A673 (cell line): ENCODE measurements at regions of chr18 and their contacts with region 1.

Region 1: DNA sequence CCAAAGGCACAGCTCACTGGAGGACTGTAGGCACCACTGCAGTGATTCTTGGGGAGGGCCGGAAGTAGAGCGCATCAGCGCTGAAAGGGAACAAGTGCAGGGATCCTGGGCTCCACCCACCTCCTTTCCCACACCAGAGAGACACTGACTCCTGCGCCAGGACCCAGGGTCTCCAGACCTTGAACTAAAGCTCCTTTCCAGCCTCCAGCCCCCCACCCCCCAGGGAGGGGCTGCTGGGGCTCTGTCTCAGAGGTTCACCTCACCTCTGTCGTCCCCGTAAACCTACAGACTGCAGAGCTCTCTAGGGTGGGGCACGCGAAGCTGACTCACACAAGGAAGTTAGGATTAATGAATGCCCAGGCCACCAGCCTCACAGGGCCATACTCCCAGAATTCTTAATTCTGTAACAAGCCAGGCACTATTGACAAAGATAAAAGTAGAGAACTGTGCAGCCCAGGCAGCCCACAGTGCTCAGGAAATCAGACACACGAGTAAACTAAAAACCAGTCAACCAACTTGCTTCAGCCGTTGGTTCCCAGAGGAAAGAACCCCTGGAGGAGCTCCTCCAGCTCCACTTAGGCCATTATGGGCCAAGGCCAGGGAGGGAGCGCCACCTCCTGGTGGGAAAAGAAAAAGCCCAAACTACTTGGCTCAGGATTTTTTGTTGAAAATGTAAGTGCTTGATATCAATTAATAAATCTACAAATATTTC is 45.1 kb upstream of the ACAA2 start:
- DNase-seq: peak; percentile 79
- H3K4me3 ChIP-seq: no peak overlapping the region
- H3K27ac ChIP-seq: no peak overlapping the region
- H3K4me1 ChIP-seq: no peaks in the 10 kb centered on the region
- H3K27me3 ChIP-seq: no peaks in the 10 kb centered on the region
- CTCF ChIP-seq: peak; percentile 95

Region 2: GRCh38 chr18:49464718-49465598 is 393.5 kb before region 1 on chr18:
- CTCF ChIA-PET with region 1: interaction called, 16 read pairs
- POLR2A ChIA-PET with region 1: no interaction called
- intact Hi-C with region 1: loop called (anchors 1 kb)
- DNase-seq: peak; percentile 89
- H3K4me3 ChIP-seq: no peak overlapping the region
- H3K27ac ChIP-seq: no peak overlapping the region
- H3K4me1 ChIP-seq: peaks cover 9% of the 10 kb centered on the region
- H3K27me3 ChIP-seq: no peaks in the 10 kb centered on the region
- CTCF ChIP-seq: peak; percentile 42; the same call in 1 of the 2 replicates

Region 3: DNA sequence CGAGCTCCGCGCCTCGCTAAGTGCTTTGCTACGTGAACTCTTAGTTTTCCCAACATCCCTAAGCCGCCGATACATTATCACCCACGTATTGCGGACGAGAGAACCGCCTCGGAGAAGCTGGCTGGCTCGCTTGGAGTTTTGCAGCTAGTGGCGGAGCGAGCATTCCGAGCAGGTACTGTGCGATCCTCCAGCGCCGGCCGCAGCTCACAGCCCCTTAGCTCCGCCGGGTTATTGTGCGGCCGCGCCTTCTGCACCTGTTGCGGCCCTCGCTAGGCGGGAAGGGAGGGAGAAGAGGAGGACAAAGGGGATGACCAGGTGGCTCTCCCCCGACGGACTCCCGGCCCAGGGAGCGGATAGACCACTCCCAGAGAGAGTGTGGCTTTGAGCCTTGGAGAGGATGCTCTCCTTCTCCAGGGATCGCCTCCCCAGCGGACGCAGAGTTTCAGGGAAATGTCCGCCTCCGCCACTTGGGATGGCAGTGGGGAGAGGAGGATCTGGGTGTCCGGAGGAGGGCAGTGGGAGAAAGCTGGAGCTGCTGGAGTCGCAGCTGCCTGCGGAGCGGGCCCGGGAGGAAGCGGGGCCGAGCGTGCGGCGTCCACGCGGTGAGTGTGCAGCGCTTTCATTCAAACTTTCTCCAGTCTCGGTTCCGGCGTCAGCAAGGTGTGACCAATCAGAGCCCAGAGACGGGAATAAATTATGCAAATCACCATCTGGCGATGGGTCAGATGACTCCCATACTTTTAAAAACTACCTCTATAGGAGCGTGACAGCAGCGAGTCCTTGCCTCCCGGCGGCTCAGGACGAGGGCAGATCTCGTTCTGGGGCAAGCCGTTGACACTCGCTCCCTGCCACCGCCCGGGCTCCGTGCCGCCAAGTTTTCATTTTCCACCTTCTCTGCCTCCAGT is 296.9 kb before region 1 on chr18 and contains the start of gene LIPG:
- CTCF ChIA-PET with region 1: interaction called, 14 read pairs
- POLR2A ChIA-PET with region 1: no interaction called
- intact Hi-C with region 1: loop called (anchors 1 kb)
- DNase-seq: peak; percentile 83
- H3K4me3 ChIP-seq: peak within 1 kb of the TSS; percentile 44
- H3K27ac ChIP-seq: no peak within 1 kb of the TSS
- H3K4me1 ChIP-seq: peaks cover 15% of the 10 kb centered on the region
- H3K27me3 ChIP-seq: peaks cover 27% of the 10 kb centered on the region
- CTCF ChIP-seq: no peak
- total RNA-seq, gene LIPG: 5.8 and 8.4 TPM in 2 replicates

Region 4: DNA sequence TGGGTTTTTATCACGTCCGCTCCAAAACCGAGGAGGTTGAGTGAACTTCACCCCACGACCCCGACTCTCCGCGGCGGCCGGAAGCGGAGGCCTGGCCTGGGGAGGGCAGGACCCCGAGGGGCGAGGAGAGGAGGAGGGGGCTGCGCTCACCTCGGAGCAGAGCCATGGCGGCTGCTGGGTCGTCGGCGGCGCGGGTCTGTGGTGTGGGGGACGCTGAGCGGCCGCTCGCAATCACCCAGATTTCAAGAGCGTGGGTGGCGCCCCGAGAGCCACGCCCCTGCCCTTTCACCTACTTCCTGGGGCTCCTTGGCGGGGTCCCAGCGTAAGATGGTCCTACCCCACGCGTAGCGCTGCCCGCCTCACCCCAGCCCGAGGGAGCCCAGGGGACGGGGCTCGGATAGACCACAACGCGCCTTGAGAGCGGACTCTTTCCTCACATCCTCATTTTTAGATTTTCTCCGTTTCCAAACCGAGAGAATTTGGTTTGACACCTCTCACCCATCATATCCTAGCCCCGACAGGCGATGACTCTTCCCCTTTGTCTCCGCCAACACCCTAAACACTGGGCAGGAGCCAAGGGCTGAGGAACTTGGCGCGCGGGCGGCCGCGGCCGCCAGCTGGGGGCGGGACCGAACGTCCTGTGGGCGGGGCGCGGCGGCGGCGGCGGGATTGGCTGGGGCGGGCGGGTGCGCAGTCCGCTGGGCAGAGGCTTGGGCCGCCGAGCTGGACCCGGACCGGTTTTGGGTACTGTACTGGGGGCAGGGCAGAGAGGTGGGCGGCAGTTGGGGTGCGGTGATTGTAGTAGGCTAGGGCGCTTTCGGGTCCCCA is 44.9 kb before region 1 on chr18 and contains the start of gene ACAA2:
- CTCF ChIA-PET with region 1: interaction called, 7 read pairs
- POLR2A ChIA-PET with region 1: no interaction called
- intact Hi-C with region 1: loop called (anchors 1 kb)
- DNase-seq: peak; percentile 79
- H3K4me3 ChIP-seq: peak within 1 kb of the TSS; percentile 71
- H3K27ac ChIP-seq: peak within 1 kb of the TSS; percentile 78
- H3K4me1 ChIP-seq: peaks cover 4% of the 10 kb centered on the region
- H3K27me3 ChIP-seq: no peaks in the 10 kb centered on the region
- CTCF ChIP-seq: no peak
- total RNA-seq, gene ACAA2: 51.1 and 60.6 TPM in 2 replicates

Region 5: DNA sequence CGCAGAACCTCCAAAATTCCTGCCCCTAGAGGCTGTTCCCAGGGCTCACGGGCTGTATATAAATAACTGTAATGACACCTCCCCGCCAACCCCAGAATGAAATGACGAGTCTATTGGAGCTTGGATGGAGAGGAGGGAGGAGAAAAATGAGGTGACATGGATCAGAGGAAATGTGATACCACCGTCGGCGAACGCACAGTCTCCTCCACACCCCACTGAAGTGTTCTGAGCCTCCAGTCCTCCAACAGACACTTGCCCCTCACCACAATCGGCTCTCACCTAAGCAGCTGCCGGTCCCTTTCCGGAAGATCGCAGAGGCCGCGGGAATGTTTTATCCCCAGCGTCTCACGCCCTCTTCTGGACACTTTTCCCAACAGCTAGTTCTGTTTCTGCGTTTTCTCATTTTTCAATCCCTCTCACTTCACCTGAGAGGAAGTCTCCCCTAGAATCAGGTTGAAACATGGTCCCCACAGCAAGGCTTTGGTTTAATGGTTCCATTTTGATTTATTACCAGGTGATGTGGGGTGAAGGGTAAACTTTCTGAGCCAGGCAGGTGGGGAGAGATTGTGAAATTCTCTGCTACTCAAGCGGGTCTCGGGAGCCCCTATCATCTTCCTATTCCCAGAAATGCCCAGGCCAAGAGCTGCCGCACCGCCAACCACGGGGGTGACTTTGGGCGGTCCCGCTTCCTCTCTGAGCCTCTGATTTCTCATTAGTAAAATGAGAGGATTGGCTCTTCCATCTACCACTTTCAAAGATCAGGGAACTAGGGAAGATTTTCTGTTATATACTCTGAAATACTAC is 345.5 kb after region 1 on chr18:
- CTCF ChIA-PET with region 1: interaction called, 3 read pairs
- POLR2A ChIA-PET with region 1: no interaction called
- intact Hi-C with region 1: loop called (anchors 10 kb)
- DNase-seq: peak; percentile 65
- H3K4me3 ChIP-seq: no peak overlapping the region
- H3K27ac ChIP-seq: no peak overlapping the region
- H3K4me1 ChIP-seq: no peaks in the 10 kb centered on the region
- H3K27me3 ChIP-seq: peaks cover 63% of the 10 kb centered on the region
- CTCF ChIP-seq: peak; percentile 78